ENCODE measurements at regions of chr17 and their contacts with region 1.

Region 1: DNA sequence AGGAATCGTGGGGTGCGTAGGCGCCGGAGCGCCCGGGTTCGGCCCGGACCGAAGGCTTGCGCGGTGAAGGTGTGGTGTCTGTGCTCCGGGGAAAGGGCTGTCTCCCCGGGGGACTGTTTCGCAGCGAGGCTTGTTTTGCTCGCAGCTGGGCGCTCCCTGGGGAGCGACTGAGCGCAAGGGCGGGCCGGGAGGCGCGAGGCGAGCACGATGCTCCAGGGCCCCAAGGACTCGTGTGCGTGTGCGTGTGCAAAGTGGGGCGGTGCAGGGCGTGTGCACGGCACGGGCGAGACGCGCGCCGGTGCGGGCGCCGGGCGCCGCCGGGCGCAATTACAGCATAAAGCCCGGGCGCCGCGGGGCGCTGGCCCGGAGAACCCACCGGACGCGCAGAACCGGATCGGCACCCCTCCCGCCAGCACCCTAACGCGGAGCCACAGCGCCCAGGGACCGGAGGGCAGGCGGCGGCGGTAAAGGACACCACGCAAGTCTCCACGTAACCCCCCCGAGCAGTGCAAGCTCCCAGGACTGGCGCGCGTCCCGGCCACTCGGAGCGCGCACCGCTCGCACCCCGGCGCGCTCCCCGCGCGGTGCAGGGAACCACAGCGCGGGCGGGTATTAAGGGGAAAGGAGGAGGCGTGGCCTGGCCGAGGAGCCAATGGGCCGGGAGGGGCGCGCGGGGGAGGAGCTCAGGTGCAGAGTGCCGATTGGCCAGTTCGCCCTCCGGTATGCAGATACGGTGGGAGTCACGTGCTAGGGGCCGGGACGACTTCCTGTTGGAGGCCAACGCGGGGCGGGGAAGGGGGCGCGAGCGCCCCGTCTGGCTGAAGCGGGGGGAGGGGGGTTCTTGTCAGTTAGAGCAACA is at the start of gene TNRC6C:
- DNase-seq: peak; percentile 99 to 100 (median 100)
- ATAC-seq: peak; percentile 85
- H3K4me3 ChIP-seq: peak within 1 kb of the TSS; percentile 95
- H3K4me3 Mint-ChIP-seq: peak within 1 kb of the TSS; percentile 96
- H3K27ac ChIP-seq: peak within 1 kb of the TSS; percentile 44 to 76
- H3K27ac Mint-ChIP-seq: peak within 1 kb of the TSS; percentile 94
- H3K4me1 ChIP-seq: peaks cover 36% of the 10 kb centered on the region
- H3K4me1 Mint-ChIP-seq: peaks cover 44% of the 10 kb centered on the region
- H3K27me3 ChIP-seq: no peaks in the 10 kb centered on the region
- H3K27me3 Mint-ChIP-seq: no peaks in the 10 kb centered on the region
- CTCF ChIP-seq: no peak
- total RNA-seq, gene TNRC6C: 50.7 to 57.3 TPM

Region 2: GRCh38 chr17:77140166-77140878 is 817.8 kb before region 1 on chr17:
- CTCF ChIA-PET with region 1: no interaction called
- POLR2A ChIA-PET with region 1: interaction called, 13 read pairs
- intact Hi-C with region 1: no loop called
- DNase-seq: peak; percentile 99 to 100 (median 100)
- ATAC-seq: peak; percentile 88
- H3K4me3 ChIP-seq: peak overlapping the region; percentile 74
- H3K4me3 Mint-ChIP-seq: peak overlapping the region; percentile 90
- H3K27ac ChIP-seq: peak overlapping the region; percentile 84 to 86
- H3K27ac Mint-ChIP-seq: peak overlapping the region; percentile 95
- H3K4me1 ChIP-seq: peaks cover 46% of the 10 kb centered on the region
- H3K4me1 Mint-ChIP-seq: peaks cover 61% of the 10 kb centered on the region
- H3K27me3 ChIP-seq: no peaks in the 10 kb centered on the region
- H3K27me3 Mint-ChIP-seq: no peaks in the 10 kb centered on the region
- CTCF ChIP-seq: no peak

Region 3: GRCh38 chr17:77542551-77543490 is 415.3 kb before region 1 on chr17:
- CTCF ChIA-PET with region 1: interaction called, 3 read pairs
- POLR2A ChIA-PET with region 1: interaction called, 17 read pairs
- intact Hi-C with region 1: no loop called
- DNase-seq: peak; percentile 45 to 80 (median 56)
- ATAC-seq: peak; percentile 93
- H3K4me3 ChIP-seq: no peak overlapping the region
- H3K4me3 Mint-ChIP-seq: no peak overlapping the region
- H3K27ac ChIP-seq: no peak overlapping the region
- H3K27ac Mint-ChIP-seq: no peak overlapping the region
- H3K4me1 ChIP-seq: peaks cover 6% of the 10 kb centered on the region
- H3K4me1 Mint-ChIP-seq: no peaks in the 10 kb centered on the region
- H3K27me3 ChIP-seq: no peaks in the 10 kb centered on the region
- H3K27me3 Mint-ChIP-seq: peaks cover 7% of the 10 kb centered on the region
- CTCF ChIP-seq: peak; percentile 88

Region 4: GRCh38 chr17:77772461-77772897 is 185.6 kb before region 1 on chr17:
- CTCF ChIA-PET with region 1: interaction called, 5 read pairs
- POLR2A ChIA-PET with region 1: interaction called, 22 read pairs
- intact Hi-C with region 1: loop called (anchors 2 to 5 kb)
- DNase-seq: peak; percentile 43 to 81 (median 64)
- ATAC-seq: peak; percentile 98
- H3K4me3 ChIP-seq: no peak overlapping the region
- H3K4me3 Mint-ChIP-seq: no peak overlapping the region
- H3K27ac ChIP-seq: no peak overlapping the region
- H3K27ac Mint-ChIP-seq: no peak overlapping the region
- H3K4me1 ChIP-seq: peaks cover 11% of the 10 kb centered on the region
- H3K4me1 Mint-ChIP-seq: peaks cover 14% of the 10 kb centered on the region
- H3K27me3 ChIP-seq: no peaks in the 10 kb centered on the region
- H3K27me3 Mint-ChIP-seq: no peaks in the 10 kb centered on the region
- CTCF ChIP-seq: peak; percentile 71

Region 5: GRCh38 chr17:77881545-77881944 is 76.5 kb before region 1 on chr17:
- CTCF ChIA-PET with region 1: no interaction called
- POLR2A ChIA-PET with region 1: interaction called, 120 read pairs
- intact Hi-C with region 1: loop called (anchors 1 to 2 kb)
- DNase-seq: peak; percentile 44 to 91 (median 66)
- ATAC-seq: peak; percentile 14
- H3K4me3 ChIP-seq: peak overlapping the region; percentile 50
- H3K4me3 Mint-ChIP-seq: peak overlapping the region; percentile 87
- H3K27ac ChIP-seq: peak overlapping the region; percentile 93 to 99
- H3K27ac Mint-ChIP-seq: peak overlapping the region; percentile 97
- H3K4me1 ChIP-seq: peaks cover 91% of the 10 kb centered on the region
- H3K4me1 Mint-ChIP-seq: peaks cover 87% of the 10 kb centered on the region
- H3K27me3 ChIP-seq: no peaks in the 10 kb centered on the region
- H3K27me3 Mint-ChIP-seq: no peaks in the 10 kb centered on the region
- CTCF ChIP-seq: no peak

Region 6: GRCh38 chr17:77990301-77990700 is 32.2 kb after region 1 on chr17:
- CTCF ChIA-PET with region 1: interaction called, 5 read pairs
- POLR2A ChIA-PET with region 1: interaction called, 20 read pairs
- intact Hi-C with region 1: no loop called
- DNase-seq: no peak
- ATAC-seq: no peak
- H3K4me3 ChIP-seq: no peak overlapping the region
- H3K4me3 Mint-ChIP-seq: no peak overlapping the region
- H3K27ac ChIP-seq: no peak overlapping the region
- H3K27ac Mint-ChIP-seq: peak overlapping the region; percentile 34
- H3K4me1 ChIP-seq: peaks cover 9% of the 10 kb centered on the region
- H3K4me1 Mint-ChIP-seq: peaks cover 79% of the 10 kb centered on the region
- H3K27me3 ChIP-seq: no peaks in the 10 kb centered on the region
- H3K27me3 Mint-ChIP-seq: no peaks in the 10 kb centered on the region
- CTCF ChIP-seq: no peak

Region 7: GRCh38 chr17:78040440-78041385 is 82.6 kb after region 1 on chr17:
- CTCF ChIA-PET with region 1: no interaction called
- POLR2A ChIA-PET with region 1: interaction called, 12 read pairs
- intact Hi-C with region 1: no loop called
- DNase-seq: peak in 13 of 14 experiments; percentile 15 to 73 (median 38)
- ATAC-seq: peak; percentile 91
- H3K4me3 ChIP-seq: peak overlapping the region; percentile 47
- H3K4me3 Mint-ChIP-seq: peak overlapping the region; percentile 76
- H3K27ac ChIP-seq: peak overlapping the region in 1 of 2 donors; percentile 26
- H3K27ac Mint-ChIP-seq: peak overlapping the region; percentile 94
- H3K4me1 ChIP-seq: peaks cover 15% of the 10 kb centered on the region
- H3K4me1 Mint-ChIP-seq: peaks cover 70% of the 10 kb centered on the region
- H3K27me3 ChIP-seq: no peaks in the 10 kb centered on the region
- H3K27me3 Mint-ChIP-seq: no peaks in the 10 kb centered on the region
- CTCF ChIP-seq: no peak

Region 8: DNA sequence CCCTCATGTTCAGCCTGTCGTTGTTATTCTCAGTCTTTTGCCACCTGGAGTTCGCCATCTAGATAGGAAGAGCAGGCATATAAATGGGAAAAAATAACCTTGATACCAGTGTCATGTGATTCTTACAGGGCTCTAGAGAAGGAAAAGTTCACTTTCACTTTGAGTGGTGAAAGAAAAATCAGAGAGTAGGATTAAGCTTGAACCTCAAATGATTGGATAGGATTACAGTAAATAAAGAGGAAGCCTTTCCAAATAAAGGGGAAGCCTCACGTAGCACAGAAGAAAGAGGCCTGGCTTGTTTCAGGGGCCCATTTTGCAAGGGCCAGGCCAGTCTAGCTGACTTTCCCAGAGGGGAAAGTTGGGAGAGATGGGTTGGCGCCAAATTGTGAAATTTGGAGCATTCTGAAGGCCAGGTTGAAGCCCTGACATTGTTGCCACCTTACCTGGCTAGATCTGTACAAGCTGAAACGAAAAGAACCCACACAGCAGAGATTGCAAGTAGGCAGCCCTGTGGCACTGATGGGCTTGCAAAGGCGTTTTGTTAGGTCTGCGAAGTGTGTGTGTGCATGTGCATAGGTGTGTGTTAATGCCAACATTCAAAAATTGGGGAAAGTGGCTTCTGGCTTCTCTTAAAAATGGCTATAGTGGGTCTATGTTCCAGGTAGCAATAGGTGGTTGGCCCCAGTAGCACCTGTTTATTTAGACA is 131.6 kb after region 1 on chr17:
- CTCF ChIA-PET with region 1: no interaction called
- POLR2A ChIA-PET with region 1: no interaction called
- intact Hi-C with region 1: no loop called
- DNase-seq: no peak
- ATAC-seq: no peak
- H3K4me3 ChIP-seq: no peak overlapping the region
- H3K4me3 Mint-ChIP-seq: no peak overlapping the region
- H3K27ac ChIP-seq: no peak overlapping the region
- H3K27ac Mint-ChIP-seq: peak overlapping the region; percentile 25
- H3K4me1 ChIP-seq: no peaks in the 10 kb centered on the region
- H3K4me1 Mint-ChIP-seq: no peaks in the 10 kb centered on the region
- H3K27me3 ChIP-seq: no peaks in the 10 kb centered on the region
- H3K27me3 Mint-ChIP-seq: no peaks in the 10 kb centered on the region
- CTCF ChIP-seq: no peak

Region 9: GRCh38 chr17:78517421-78517820 is 559.3 kb after region 1 on chr17:
- CTCF ChIA-PET with region 1: no interaction called
- POLR2A ChIA-PET with region 1: no interaction called
- intact Hi-C with region 1: no loop called
- DNase-seq: no peak
- ATAC-seq: no peak
- H3K4me3 ChIP-seq: no peak overlapping the region
- H3K4me3 Mint-ChIP-seq: no peak overlapping the region
- H3K27ac ChIP-seq: no peak overlapping the region
- H3K27ac Mint-ChIP-seq: no peak overlapping the region
- H3K4me1 ChIP-seq: no peaks in the 10 kb centered on the region
- H3K4me1 Mint-ChIP-seq: no peaks in the 10 kb centered on the region
- H3K27me3 ChIP-seq: no peaks in the 10 kb centered on the region
- H3K27me3 Mint-ChIP-seq: no peaks in the 10 kb centered on the region
- CTCF ChIP-seq: no peak

Measured in CD4-positive, alpha-beta T cell (primary cell).